ENCODE measurements at regions of chr11 and their contacts with region 1.

Region 1: GRCh38 chr11:2885676-2886081 is at the start of gene CDKN1C:
- DNase-seq: peak; percentile 79 to 89 (median 85)
- H3K4me3 ChIP-seq: peak within 1 kb of the TSS; percentile 69
- H3K4me3 Mint-ChIP-seq: peak within 1 kb of the TSS; percentile 82 to 95 (median 89)
- H3K27ac ChIP-seq: peak within 1 kb of the TSS; percentile 24
- H3K27ac Mint-ChIP-seq: peak within 1 kb of the TSS in 7 of 8 donors; percentile 61 to 91 (median 74)
- H3K4me1 ChIP-seq: peaks cover 13% of the 10 kb centered on the region
- H3K4me1 Mint-ChIP-seq: peaks cover 9 to 27% (median 26%) of the 10 kb centered on the region in 3 donors
- H3K27me3 ChIP-seq: no peaks in the 10 kb centered on the region
- H3K27me3 Mint-ChIP-seq: no peaks in the 10 kb centered on the region
- total RNA-seq, gene CDKN1C: 1.0 to 1.1 TPM

Region 2: GRCh38 chr11:2901854-2902783 is 16.4 kb after region 1 on chr11:
- CTCF ChIA-PET with region 1: interaction called, 21 read pairs
- POLR2A ChIA-PET with region 1: interaction called, 5 read pairs
- DNase-seq: peak; percentile 80 to 92 (median 91)
- H3K4me3 ChIP-seq: peak overlapping the region; percentile 71
- H3K4me3 Mint-ChIP-seq: peak overlapping the region; percentile 71 to 89 (median 78)
- H3K27ac ChIP-seq: peak overlapping the region; percentile 65
- H3K27ac Mint-ChIP-seq: peak overlapping the region; percentile 36 to 96 (median 69)
- H3K4me1 ChIP-seq: peaks cover 43% of the 10 kb centered on the region
- H3K4me1 Mint-ChIP-seq: peaks cover 41 to 59% (median 44%) of the 10 kb centered on the region in 3 donors
- H3K27me3 ChIP-seq: no peaks in the 10 kb centered on the region
- H3K27me3 Mint-ChIP-seq: peaks cover 0 to 1% of the 10 kb centered on the region in 2 donors

Measured in CD8-positive, alpha-beta memory T cell (primary cell).